Psoas muscle (tissue), 8 donors: ENCODE measurements at regions of chr6 and their contacts with region 1.

Region 1: DNA sequence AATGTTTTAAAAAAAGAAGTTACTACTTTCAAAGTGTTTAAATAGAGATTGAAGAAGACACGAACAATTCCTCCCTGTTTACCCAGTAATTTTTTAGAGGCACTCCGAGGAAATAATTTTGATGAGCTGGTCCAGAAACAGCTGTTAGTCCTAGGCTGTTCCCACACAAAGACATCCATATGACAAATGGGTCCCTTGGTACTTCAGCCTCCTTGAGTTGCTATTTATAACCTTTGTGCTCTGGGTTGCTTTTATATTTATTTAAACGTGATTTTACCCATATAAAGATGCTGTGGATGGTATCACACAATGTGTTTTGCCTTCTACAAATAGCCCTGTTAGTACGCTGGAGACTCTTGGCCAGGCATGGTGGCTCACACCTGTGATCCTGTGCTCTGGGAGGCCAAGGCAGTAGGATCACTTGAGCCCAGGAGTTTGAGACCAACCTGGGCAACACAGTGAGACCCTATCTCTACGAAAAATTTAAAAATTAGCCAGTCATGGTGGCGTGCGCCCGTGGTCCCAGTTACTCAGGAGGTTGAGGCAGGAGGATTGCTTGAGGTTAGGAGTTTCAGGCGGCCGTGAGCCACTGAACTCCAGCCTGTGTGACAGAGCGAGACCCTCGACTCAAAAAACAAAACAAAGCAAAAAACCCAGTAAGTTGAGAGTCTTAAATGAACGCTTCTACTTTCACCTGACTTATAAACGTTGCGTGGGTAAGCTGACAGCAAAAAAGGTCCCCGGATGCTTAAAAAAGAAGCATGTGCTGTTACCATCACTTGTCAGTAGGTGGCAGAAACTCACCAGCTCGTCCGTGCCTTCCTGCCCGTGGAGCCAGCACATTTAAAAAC is 56.9 kb upstream of the ARMH2 start:
- DNase-seq: peak; percentile 27 to 60
- ATAC-seq: peak; percentile 79 to 95 (median 84)
- H3K4me3 ChIP-seq: no peak overlapping the region
- H3K27ac ChIP-seq: no peak overlapping the region
- H3K4me1 ChIP-seq: no peaks in the 10 kb centered on the region
- H3K27me3 ChIP-seq: no peaks in the 10 kb centered on the region
- CTCF ChIP-seq: peak; percentile 91

Region 2: GRCh38 chr6:24933868-24934401 is 78.3 kb after region 1 on chr6:
- intact Hi-C with region 1: loop called in 1 of 2 experiments (anchors 5 kb)
- DNase-seq: no peak
- ATAC-seq: no peak
- H3K4me3 ChIP-seq: no peak overlapping the region
- H3K27ac ChIP-seq: no peak overlapping the region
- H3K4me1 ChIP-seq: peaks cover 29% of the 10 kb centered on the region
- H3K27me3 ChIP-seq: no peaks in the 10 kb centered on the region
- CTCF ChIP-seq: peak; percentile 25

Region 3: DNA sequence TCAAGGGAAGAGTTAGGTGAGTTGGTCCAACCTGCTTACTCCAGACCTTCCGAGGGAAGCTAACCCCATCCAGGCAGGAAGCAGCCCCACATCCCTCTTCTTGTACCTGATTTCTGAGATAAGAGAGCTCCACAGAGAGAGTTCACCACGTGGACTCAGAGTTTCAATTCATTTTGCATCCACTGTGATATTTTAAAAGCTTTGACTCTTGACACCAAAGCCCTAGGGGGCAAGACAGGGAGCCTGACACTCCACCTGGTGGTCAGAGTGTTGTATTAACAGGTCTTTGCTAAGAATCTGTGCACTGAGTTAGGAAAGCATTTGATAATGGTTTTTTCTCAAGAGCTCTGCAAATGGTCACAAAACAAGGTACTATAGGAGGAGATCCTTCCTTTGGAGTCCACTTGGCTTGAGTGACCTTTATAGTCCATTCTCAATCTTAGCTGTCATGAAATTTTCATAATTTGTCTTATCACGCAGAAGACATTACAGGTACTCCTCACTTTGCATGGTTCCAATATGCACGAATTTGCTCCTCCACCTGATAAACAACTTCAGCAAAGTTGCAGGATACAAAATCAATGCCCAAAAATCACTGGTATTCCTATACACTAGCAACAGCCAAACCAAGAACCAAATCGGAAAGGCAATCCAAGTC is 136.3 kb after region 1 on chr6:
- intact Hi-C with region 1: loop called (anchors 2 kb)
- DNase-seq: peak in 1 of 2 donors; percentile 68
- ATAC-seq: peak; percentile 77 to 95 (median 88)
- H3K4me3 ChIP-seq: no peak overlapping the region
- H3K27ac ChIP-seq: no peak overlapping the region
- H3K4me1 ChIP-seq: no peaks in the 10 kb centered on the region
- H3K27me3 ChIP-seq: no peaks in the 10 kb centered on the region
- CTCF ChIP-seq: peak; percentile 87

Region 4: DNA sequence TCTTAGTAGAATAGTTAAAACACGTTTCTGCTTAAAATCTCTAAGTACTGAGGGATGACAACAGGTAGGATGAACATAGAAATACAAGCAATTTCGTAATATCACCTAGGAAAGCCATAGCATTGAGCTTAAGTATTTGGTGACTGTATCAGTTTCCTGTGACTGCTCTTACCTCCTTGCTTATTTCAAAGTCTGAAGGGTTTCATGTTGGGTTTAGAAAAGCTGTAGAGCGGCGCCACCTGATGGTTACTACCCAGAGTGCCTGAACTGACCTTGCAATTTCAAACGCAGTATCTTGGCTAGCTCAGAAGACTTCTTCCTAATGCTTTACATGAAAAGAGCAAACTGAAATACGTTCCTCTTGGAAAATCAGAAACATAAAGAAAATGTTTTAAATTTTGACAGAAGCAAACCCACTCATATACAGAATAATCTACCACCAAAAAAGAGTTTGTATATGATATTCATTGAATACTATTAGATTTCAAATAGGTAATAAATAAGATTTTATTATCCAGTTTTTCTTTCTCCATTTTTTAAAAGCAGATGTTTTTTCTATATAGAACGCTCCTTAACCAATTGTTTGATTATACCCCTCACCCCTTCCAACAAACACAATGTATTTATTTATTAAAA is 162.4 kb after region 1 on chr6:
- intact Hi-C with region 1: loop called (anchors 2 to 5 kb)
- DNase-seq: peak; percentile 51 to 76
- ATAC-seq: peak; percentile 71 to 91 (median 83)
- H3K4me3 ChIP-seq: no peak overlapping the region
- H3K27ac ChIP-seq: no peak overlapping the region
- H3K4me1 ChIP-seq: no peaks in the 10 kb centered on the region
- H3K27me3 ChIP-seq: no peaks in the 10 kb centered on the region
- CTCF ChIP-seq: peak; percentile 66

Region 5: DNA sequence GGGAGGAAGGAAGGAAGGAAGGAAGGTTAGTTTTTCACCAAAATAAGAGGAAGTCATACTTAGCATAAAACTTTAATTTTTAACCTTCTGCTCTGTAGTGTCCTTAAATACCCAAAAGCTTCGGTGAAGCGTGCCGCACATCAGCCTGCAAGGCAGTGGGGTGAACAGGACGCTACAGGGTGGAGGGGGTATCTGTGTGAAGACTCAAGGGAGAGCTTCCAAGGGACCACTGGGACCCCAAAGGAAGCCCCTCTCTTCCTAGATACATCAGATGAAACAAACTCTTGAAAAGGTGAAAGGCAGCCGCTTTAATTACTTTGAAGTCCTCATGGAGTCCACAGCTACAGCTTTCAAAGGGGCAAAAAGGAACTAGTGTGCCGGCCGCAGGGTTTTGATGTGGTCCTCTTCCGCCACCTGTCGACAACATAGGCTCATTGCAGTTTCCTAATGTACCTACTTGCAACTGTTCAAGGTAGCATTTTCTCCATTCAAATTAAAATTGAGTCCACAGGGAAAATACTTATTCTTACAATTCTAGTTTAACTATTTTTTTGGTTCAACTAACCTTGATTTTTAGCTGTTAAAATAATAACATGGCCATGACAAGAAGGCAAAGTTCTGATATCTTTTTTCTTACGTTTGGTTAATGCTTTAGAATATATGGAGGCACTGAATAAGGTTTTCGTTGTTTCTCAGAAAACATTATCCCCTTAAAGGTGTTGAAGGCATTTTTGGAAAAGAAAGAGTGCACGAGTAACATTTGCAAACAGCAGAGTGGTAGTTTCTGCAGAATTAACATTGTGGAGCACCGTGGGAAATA is 215.1 kb after region 1 on chr6:
- intact Hi-C with region 1: loop called (anchors 2 to 5 kb)
- DNase-seq: peak; percentile 61 to 73
- ATAC-seq: peak; percentile 82 to 87 (median 84)
- H3K4me3 ChIP-seq: no peak overlapping the region
- H3K27ac ChIP-seq: no peak overlapping the region
- H3K4me1 ChIP-seq: no peaks in the 10 kb centered on the region
- H3K27me3 ChIP-seq: peaks cover 0 to 2% (median 0%) of the 10 kb centered on the region in 3 donors
- CTCF ChIP-seq: peak; percentile 90

Region 6: GRCh38 chr6:25223490-25223991 is 367.9 kb after region 1 on chr6:
- intact Hi-C with region 1: no loop called
- DNase-seq: peak; percentile 63 to 68
- ATAC-seq: peak in 2 of 4 donors; percentile 55 to 56
- H3K4me3 ChIP-seq: peak overlapping the region; percentile 8
- H3K27ac ChIP-seq: no peak overlapping the region
- H3K4me1 ChIP-seq: no peaks in the 10 kb centered on the region
- H3K27me3 ChIP-seq: no peaks in the 10 kb centered on the region
- CTCF ChIP-seq: peak; percentile 84